HEK293T (cell line): ENCODE measurements at regions of chr15 and their contacts with region 1.

Region 1: GRCh38 chr15:78437762-78438302 is at the start of gene IREB2:
- DNase-seq: peak; percentile 99

Region 2: DNA sequence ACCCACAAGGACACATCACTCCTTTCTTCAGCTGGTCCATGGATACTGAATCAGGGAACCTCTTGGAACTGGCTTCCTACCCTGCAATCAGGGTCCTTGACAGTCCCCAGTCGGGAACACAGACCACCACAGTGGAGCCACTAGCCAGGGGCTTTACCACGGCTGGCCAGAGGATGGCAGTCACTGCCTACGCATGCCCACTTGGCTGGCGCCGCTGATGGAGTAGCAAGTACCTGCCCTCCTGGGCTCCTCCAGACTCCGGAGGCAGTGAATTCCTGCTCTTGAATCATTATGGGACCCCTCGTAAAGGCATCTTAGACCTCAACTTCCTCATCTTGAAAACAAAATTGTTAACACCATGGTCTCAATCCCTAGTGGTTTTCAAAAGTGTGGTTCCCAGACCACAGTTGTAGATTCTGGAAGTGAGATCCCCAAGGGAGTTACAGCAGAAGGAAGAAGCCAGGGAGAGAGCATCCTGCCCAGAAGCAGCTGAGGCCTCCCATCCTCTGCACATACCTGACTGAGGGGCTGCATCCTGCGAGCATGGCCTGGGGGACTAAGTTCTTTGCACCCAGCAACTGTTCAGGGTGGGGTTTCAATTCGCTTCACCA is 129.3 kb before region 1 on chr15:
- CTCF ChIA-PET with region 1: interaction called, 5 read pairs
- POLR2A ChIA-PET with region 1: interaction called, 21 read pairs
- DNase-seq: peak; percentile 90

Region 3: DNA sequence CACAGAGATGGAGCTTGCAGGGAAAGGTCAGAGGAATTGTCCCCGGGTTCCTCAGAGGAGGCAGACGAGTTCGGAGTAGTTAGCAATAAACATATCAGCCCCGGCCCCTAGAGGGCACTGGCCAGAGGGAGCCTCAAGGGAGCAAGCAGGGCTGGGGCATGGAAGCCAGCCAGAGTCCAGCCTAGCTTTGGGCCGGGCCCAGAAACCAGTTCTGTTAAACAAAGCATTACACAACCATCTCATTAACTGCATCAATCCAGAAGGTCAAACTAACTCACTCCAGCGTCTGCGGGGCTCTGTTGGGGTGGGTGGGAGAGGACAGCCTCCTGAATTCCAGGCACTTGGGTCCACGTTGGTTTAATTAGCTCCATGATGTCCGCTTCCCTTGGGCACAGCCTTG is 40.9 kb before region 1 on chr15:
- CTCF ChIA-PET with region 1: no interaction called
- POLR2A ChIA-PET with region 1: interaction called, 17 read pairs
- DNase-seq: peak; percentile 69

Region 4: DNA sequence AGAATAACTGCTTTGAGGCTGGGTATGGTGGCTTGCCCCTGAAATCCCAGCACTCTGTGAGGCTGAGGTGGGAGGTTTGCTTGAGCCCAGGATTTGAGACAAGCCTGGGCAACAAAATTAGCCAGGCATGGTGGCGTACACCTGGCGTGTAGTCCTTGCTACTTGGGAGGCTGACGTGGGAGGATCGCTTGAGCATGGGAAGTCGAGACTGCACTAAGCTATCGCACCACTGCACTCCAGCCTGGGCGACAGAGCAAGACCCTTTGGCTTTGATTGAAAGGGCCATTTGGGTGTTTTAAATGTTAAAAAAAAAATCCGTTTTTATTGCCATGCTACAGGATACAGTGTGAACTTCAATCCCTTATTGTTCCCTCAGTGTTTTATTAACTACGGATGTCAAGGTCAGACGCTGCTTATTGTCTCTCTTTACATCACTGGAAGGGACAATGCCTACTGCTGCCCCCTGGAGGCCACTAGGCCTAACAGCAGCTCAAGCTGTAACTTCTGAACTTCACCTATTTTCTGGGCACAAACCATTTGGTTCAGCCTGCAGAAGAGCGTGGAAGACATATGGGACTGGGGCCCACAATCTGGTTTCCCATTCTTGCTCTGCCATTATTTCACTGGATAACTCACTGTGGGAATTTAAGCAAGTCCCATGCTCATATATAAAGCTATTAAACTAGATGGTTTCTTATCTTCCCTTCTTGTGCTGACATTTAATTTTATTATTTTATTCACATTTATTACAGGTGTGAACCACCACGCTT is 15.1 kb before region 1 on chr15:
- CTCF ChIA-PET with region 1: interaction called, 10 read pairs
- POLR2A ChIA-PET with region 1: interaction called, 34 read pairs
- DNase-seq: peak; percentile 81

Region 5: GRCh38 chr15:78565097-78565951 is 127.5 kb after region 1 on chr15 and contains the start of gene CHRNA5:
- CTCF ChIA-PET with region 1: no interaction called
- POLR2A ChIA-PET with region 1: interaction called, 10 read pairs
- DNase-seq: peak; percentile 87